Activated CD4-positive, alpha-beta memory T cell treated with anti-CD3 and anti-CD28 coated beads for 36 hours (primary cell): ENCODE measurements at regions of chr6 and their contacts with region 1.

Region 1: DNA sequence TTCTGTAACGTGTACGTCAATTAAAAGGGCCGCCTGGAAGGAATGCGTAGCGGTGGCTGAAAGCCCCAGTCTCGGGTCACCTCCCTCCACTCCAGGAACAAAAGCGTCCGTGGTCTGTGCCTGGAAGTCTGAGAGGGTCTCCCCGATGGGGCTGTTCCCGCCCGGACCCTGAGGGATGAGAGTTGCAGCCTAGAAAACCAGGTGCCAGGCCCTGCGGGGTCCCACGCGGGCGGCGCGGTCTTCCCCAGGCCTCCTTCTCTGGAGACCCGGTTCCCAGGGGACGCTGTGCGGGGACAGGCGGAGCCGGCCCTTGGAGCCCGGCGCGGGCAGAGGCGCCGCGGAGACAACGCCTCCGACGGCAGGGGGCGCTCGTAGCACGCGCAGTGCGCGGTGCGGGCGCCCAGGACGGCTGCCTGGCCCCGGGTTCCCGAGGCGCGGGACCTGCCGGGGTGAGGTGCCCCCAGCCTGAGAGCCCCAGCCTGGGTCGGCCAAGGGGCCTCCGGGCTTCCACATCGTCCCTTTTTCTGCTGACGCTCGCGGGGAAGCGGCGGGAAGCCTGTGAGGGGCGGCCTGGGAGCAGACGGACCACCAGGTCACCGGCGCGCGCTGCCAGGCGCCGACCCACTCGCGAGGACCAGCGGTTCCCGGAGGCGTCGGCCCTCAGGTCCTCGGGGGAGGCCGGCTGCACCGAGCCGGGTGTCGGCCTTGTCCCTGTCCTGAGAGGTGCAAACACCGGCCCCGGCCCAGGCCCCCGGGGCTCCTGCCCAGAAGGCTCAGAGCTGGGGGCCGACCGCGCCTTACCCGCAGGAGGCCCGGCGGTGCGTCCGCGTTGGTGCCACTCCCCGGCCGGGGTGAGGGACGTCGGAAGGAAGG is 5.3 kb upstream of the FOXC1 start:
- DNase-seq: peak; percentile 65
- H3K4me3 Mint-ChIP-seq: no peak overlapping the region
- H3K27ac Mint-ChIP-seq: no peak overlapping the region
- H3K4me1 Mint-ChIP-seq: peaks cover 34% of the 10 kb centered on the region
- H3K27me3 Mint-ChIP-seq: peaks cover 78% of the 10 kb centered on the region

Region 2: GRCh38 chr6:786946-787763 is 817.2 kb before region 1 on chr6:
- CTCF ChIA-PET with region 1: no interaction called
- POLR2A ChIA-PET with region 1: no interaction called
- intact Hi-C with region 1: no loop called
- DNase-seq: peak; percentile 37
- H3K4me3 Mint-ChIP-seq: no peak overlapping the region
- H3K27ac Mint-ChIP-seq: no peak overlapping the region
- H3K4me1 Mint-ChIP-seq: peaks cover 17% of the 10 kb centered on the region
- H3K27me3 Mint-ChIP-seq: peaks cover 10% of the 10 kb centered on the region

Region 3: GRCh38 chr6:2103644-2104523 is 499.5 kb after region 1 on chr6:
- CTCF ChIA-PET with region 1: interaction called, 20 read pairs
- POLR2A ChIA-PET with region 1: no interaction called
- intact Hi-C with region 1: loop called (anchors 1 kb)
- DNase-seq: no peak
- H3K4me3 Mint-ChIP-seq: no peak overlapping the region
- H3K27ac Mint-ChIP-seq: no peak overlapping the region
- H3K4me1 Mint-ChIP-seq: no peaks in the 10 kb centered on the region
- H3K27me3 Mint-ChIP-seq: peaks cover 2% of the 10 kb centered on the region

Region 4: DNA sequence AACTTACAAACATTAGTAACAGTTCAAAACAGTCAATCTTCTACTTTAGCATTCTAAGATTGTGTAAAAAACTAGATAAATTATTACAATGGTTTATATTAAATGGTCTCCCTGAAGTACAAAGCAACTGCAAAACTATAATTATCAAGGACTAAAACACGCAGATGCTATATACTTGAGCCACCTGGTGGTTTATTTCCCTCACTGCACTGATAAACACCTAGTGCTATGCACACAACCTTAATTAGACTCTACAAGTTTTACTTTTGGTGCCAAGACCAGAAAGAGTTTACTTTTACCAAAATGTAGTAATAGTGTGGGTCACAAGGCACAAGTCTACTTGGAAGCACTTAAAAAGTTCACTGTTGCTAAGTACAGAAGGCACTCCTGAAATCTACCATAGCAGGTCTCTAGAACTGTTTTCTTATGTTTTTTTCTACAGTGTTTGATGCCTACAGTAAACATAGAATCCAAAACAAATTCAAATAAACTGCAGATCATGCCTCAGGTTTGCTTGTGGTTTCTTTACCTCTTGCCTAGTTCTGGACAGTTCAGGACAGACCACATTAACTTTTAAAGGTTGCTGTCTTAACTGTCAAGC is 591.8 kb after region 1 on chr6:
- CTCF ChIA-PET with region 1: interaction called, 6 read pairs
- POLR2A ChIA-PET with region 1: no interaction called
- intact Hi-C with region 1: loop called (anchors 1 kb)
- DNase-seq: no peak
- H3K4me3 Mint-ChIP-seq: no peak overlapping the region
- H3K27ac Mint-ChIP-seq: no peak overlapping the region
- H3K4me1 Mint-ChIP-seq: no peaks in the 10 kb centered on the region
- H3K27me3 Mint-ChIP-seq: no peaks in the 10 kb centered on the region

Region 5: GRCh38 chr6:2353412-2354137 is 749.2 kb after region 1 on chr6:
- CTCF ChIA-PET with region 1: interaction called, 14 read pairs
- POLR2A ChIA-PET with region 1: no interaction called
- intact Hi-C with region 1: loop called (anchors 1 kb)
- DNase-seq: peak; percentile 70
- H3K4me3 Mint-ChIP-seq: no peak overlapping the region
- H3K27ac Mint-ChIP-seq: no peak overlapping the region
- H3K4me1 Mint-ChIP-seq: no peaks in the 10 kb centered on the region
- H3K27me3 Mint-ChIP-seq: no peaks in the 10 kb centered on the region

Region 6: DNA sequence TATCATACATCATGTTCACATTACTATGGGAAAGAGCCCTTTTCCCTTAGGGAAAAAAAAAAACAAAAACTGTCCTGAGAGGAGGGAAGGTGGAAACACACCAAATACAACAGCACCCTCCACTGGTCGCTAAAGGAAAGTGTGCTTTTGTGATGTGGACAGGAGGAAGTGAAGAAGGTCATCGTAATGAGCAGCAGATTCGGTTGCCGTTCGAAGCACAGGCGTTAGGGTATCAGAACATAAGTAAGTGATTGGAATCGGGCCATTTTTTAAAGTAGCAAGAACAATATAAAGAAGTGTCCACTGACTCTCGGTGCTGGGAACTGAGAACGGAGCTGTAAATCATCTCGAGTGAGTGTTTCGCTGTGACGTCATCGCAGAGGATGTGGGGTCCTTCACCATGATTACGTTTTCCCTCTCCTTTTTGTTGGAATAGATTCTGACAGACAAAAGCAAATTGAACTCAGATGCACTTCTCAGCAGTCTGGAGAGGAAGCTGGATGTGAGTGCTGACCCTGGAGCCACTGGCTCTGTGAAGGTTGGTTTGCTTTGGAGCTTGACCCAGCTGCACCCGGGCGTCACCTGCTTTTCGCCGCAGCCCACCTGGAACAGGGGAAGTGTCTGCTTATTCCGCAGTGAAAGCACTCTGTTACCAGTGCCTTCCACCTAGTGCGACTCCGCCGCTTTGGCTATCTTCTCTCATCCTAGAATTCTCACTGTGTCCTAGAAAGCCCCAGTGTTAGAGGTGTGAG is 844.6 kb after region 1 on chr6:
- CTCF ChIA-PET with region 1: no interaction called
- POLR2A ChIA-PET with region 1: no interaction called
- intact Hi-C with region 1: loop called (anchors 1 kb)
- DNase-seq: peak; percentile 34
- H3K4me3 Mint-ChIP-seq: peak overlapping the region; percentile 14
- H3K27ac Mint-ChIP-seq: no peak overlapping the region
- H3K4me1 Mint-ChIP-seq: peaks cover 3% of the 10 kb centered on the region
- H3K27me3 Mint-ChIP-seq: peaks cover 3% of the 10 kb centered on the region